PC-9 (cell line): ENCODE measurements at regions of chr1 and their contacts with region 1.

Region 1: DNA sequence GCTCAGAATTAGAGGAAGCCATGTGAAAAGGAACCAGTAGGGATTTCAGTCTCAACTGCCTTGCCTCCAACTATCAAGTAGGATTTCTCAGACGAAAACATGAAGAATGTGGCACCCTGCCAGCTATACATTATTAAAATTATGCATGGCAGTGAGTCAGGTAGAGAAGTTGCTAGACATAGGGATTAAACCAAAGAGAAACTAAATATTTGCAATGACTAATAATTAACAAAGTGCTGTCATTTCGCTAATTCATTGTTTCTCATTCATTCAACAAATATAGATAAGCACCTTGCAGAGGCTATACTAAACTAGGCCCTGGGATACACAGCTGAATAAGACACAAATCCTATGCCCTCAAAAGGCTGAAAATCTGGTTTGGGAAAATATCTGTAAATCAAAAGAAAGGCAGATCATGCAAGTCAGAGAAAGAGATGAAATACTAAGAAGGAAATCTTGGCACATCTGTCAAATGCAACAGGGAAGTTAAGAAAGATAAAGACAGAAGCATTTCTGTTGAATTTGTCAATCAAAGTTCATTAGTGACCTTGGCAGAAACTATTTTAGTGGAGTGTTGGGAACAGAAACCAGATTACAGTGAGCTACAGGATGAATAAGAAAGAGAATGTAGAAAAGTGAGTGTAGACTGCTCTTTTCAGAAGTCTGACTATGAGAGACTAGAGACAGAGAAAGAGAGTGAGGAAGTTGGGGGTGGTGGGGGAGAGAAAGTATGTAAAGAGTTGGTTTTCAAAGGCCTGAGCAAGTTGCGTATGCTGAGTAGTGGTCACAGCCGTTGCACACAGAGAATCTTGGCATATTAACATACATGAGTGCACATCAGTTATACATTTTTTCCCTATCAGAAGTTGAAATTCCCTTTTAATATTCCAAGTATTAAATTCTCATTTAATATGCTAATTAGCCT is 14.7 kb upstream of the NBPF11 start:
- DNase-seq: peak in 1 of 2 experiments; percentile 81
- H3K4me3 ChIP-seq: no peak overlapping the region
- H3K27ac ChIP-seq: peak overlapping the region; percentile 49
- H3K4me1 ChIP-seq: peaks cover 18% of the 10 kb centered on the region
- H3K27me3 ChIP-seq: no peaks in the 10 kb centered on the region
- CTCF ChIP-seq: no peak

Region 2: DNA sequence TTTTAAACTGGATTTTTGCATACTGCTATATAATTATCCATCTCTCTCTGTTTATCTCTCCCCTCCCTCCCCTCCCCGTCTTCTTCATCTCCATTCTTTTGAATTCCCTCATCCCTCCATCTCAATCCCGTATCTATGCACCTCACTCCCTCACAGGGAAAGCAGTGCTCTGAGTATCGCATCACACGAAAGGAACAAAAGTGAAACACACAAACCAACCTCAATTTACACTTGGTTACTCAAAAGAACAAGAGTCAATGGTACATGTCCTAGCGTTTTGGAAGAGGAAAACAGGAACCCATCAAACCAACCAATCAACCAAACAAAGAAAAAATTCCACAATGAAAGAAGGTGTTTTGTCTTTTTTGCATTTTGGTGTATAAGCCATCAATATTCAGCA is 1113.6 kb before region 1 on chr1:
- CTCF ChIA-PET with region 1: no interaction called
- POLR2A ChIA-PET with region 1: no interaction called
- intact Hi-C with region 1: no loop called
- DNase-seq: no peak
- H3K4me3 ChIP-seq: no peak overlapping the region
- H3K27ac ChIP-seq: no peak overlapping the region
- H3K4me1 ChIP-seq: no peaks in the 10 kb centered on the region
- H3K27me3 ChIP-seq: peaks cover 50% of the 10 kb centered on the region
- CTCF ChIP-seq: no peak

Region 3: GRCh38 chr1:148290881-148291280 is 124.1 kb after region 1 on chr1:
- CTCF ChIA-PET with region 1: no interaction called
- POLR2A ChIA-PET with region 1: interaction called, 21 read pairs
- intact Hi-C with region 1: no loop called
- DNase-seq: no peak
- H3K4me3 ChIP-seq: no peak overlapping the region
- H3K27ac ChIP-seq: no peak overlapping the region
- H3K4me1 ChIP-seq: peaks cover 9% of the 10 kb centered on the region
- H3K27me3 ChIP-seq: no peaks in the 10 kb centered on the region
- CTCF ChIP-seq: no peak